IMR-90 (cell line): ENCODE measurements at regions of chr2 and their contacts with region 1.

Region 1: DNA sequence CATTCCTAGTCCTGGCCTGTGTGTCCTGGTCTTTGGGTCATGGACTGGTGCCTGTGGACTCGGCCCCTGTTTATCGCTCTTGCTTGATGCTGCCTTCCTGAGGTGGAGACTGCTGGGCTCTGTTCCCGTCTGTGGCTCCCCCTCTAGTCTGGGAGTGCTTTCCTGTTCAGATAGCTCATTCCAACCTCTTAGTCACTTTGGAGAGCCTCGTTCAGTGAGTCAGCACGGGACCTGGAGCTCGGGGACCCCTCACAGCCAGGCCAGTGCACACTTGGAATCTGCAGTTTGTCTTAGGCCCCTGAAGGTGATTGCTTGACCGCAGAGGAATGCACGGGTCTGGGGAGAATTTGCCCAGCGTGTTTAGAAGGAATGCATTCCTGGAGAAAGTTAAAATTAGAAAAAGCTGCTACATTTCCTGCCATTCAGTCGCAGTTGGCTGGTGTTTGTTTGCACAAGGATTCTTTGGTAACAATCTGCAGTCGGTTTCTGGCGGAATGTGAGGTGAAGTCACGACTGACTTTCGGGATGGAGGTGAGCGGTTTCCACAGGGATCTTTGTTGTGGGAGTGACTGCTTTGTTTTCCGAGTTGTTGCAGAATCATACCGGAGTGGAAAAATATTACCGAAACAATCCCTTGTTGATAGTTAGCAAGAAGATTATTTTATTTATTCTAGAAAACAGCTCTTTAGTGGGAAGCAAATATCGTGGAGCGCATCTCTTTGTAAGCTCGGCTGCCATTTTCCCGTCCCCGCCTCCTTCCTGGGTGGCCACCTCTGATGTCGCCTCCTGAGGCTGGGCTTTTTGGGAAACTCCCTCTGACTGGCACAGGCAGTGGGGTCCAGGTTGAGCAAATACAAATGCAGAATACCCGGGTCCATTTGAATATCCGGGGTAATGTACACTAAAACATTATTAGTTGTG is 29.6 kb downstream of the SH3BP4 start:
- DNase-seq: peak; percentile 100
- ATAC-seq: peak; percentile 82
- H3K4me3 ChIP-seq: no peak overlapping the region
- H3K27ac ChIP-seq: peak overlapping the region; percentile 86
- H3K4me1 ChIP-seq: peaks cover 54% of the 10 kb centered on the region
- H3K27me3 ChIP-seq: no peaks in the 10 kb centered on the region
- CTCF ChIP-seq: peak; percentile 44
- POLR2A ChIP-seq: peak; percentile 71
- RAD21 ChIP-seq: peak; percentile 46

Region 2: GRCh38 chr2:235098736-235099494 is 117.5 kb after region 1 on chr2:
- CTCF ChIA-PET with region 1: no interaction called
- POLR2A ChIA-PET with region 1: no interaction called
- dilution Hi-C with region 1: no loop called
- in situ Hi-C with region 1: no loop called
- intact Hi-C with region 1: loop called (anchors 5 kb)
- DNase-seq: peak; percentile 43
- ATAC-seq: peak; percentile 76
- H3K4me3 ChIP-seq: no peak overlapping the region
- H3K27ac ChIP-seq: peak overlapping the region; percentile 37; the same call in 1 of the 2 replicates
- H3K4me1 ChIP-seq: peaks cover 10% of the 10 kb centered on the region
- H3K27me3 ChIP-seq: peaks cover 3% of the 10 kb centered on the region; the same call in 1 of the 2 replicates
- CTCF ChIP-seq: no peak
- POLR2A ChIP-seq: no peak
- RAD21 ChIP-seq: no peak